ENCODE measurements at regions of chr2 and their contacts with region 1.

Region 1: GRCh38 chr2:233449081-233449901 is 95.0 kb downstream of the DGKD start:
- DNase-seq: no peak
- H3K4me3 ChIP-seq: no peak overlapping the region
- CTCF ChIP-seq: peak; percentile 84

Region 2: GRCh38 chr2:233312874-233313273 is 136.4 kb before region 1 on chr2:
- CTCF ChIA-PET with region 1: no interaction called
- POLR2A ChIA-PET with region 1: no interaction called
- DNase-seq: no peak
- H3K4me3 ChIP-seq: no peak overlapping the region
- CTCF ChIP-seq: no peak

Region 3: DNA sequence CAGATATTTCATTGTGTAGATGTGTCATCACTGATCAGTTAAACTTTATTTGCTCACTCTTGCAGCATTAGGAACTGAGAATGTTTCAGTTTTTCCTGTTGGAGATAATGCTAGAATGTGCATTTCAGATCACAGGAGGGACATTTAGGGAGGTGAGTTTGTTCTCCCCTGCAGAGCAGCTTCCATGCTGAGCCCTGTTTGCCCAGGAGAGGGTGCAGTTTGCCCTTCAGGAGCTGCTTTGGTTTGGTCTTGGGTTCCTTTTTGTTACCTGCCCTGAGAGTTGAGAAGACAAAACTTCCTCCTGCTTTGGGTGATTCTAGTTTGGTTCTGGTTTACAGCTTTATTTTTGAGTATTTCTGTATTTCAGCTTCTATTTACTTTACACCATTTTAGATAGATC is 45.1 kb before region 1 on chr2:
- CTCF ChIA-PET with region 1: interaction called, 117 read pairs
- POLR2A ChIA-PET with region 1: no interaction called
- DNase-seq: no peak
- H3K4me3 ChIP-seq: no peak overlapping the region
- CTCF ChIP-seq: peak; percentile 77

Region 4: GRCh38 chr2:233460726-233461441 is 11.6 kb after region 1 on chr2:
- CTCF ChIA-PET with region 1: interaction called, 27 read pairs
- POLR2A ChIA-PET with region 1: no interaction called
- DNase-seq: no peak
- H3K4me3 ChIP-seq: no peak overlapping the region
- CTCF ChIP-seq: no peak

Region 5: GRCh38 chr2:233711312-233712008 is 262.2 kb after region 1 on chr2:
- CTCF ChIA-PET with region 1: interaction called, 50 read pairs
- POLR2A ChIA-PET with region 1: no interaction called
- DNase-seq: no peak
- H3K4me3 ChIP-seq: no peak overlapping the region
- CTCF ChIP-seq: peak; percentile 90

Region 6: GRCh38 chr2:233832869-233833311 is 383.6 kb after region 1 on chr2:
- CTCF ChIA-PET with region 1: interaction called, 13 read pairs
- POLR2A ChIA-PET with region 1: no interaction called
- DNase-seq: no peak
- H3K4me3 ChIP-seq: no peak overlapping the region
- CTCF ChIP-seq: no peak